ENCODE measurements at regions of chr1 and their contacts with region 1.

Region 1: DNA sequence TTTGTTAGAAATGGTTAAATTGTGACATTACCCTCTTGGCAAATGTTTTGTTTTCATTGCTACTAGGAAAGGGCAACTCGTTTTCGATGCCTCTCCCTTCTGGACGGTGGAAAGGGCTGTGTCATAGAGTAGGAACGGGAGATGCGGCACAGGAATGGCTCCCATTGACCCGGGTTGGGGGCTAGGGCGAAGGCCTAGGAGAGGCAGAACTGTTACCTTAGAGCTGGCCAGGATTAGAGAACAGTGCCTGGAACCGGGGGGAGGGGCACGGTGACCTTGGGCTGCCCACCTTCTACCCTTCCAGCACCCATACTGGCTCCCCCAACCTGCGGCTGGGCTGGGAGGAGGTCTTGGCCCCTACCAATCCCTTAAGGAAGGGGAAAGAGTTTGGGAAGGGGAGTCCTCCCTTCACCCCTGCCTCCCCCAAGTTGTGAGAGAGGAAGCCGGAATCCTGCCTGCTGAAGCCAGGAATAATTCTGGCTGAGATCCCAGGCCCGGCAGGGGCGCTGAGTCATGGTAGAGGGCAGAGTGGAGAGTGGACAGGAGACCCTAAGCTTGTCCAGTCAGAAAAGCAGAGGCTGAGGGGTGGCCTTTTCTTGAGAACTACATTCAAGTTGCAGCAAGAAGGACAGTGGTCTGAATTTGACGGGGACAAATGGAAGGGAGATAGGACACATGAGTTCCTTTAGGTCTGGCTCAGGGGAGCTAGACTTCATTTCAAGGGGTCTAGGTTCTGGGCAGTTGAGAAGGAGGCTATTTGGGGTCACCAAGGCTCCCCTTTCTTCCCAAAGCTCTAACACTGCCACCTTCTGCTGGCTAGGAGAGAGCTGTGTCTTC is 8.2 kb downstream of the LMNA start:
- DNase-seq: no peak
- ATAC-seq: no peak
- H3K4me3 ChIP-seq: no peak overlapping the region
- H3K4me3 Mint-ChIP-seq: peak overlapping the region in 2 of 3 donors; percentile 31 to 45
- H3K27ac ChIP-seq: peak overlapping the region; percentile 52
- H3K27ac Mint-ChIP-seq: peak overlapping the region; percentile 87 to 90
- H3K4me1 ChIP-seq: peaks cover 13 to 71% of the 10 kb centered on the region in 2 experiments
- H3K4me1 Mint-ChIP-seq: peaks cover 53 to 78% (median 70%) of the 10 kb centered on the region in 3 donors
- H3K27me3 ChIP-seq: peaks cover 3 to 6% of the 10 kb centered on the region in 2 experiments
- H3K27me3 Mint-ChIP-seq: peaks cover 0 to 4% of the 10 kb centered on the region in 2 donors

Region 2: GRCh38 chr1:155455588-155456195 is 667.0 kb before region 1 on chr1:
- CTCF ChIA-PET with region 1: no interaction called
- POLR2A ChIA-PET with region 1: no interaction called
- DNase-seq: no peak
- ATAC-seq: no peak
- H3K4me3 ChIP-seq: no peak overlapping the region
- H3K4me3 Mint-ChIP-seq: no peak overlapping the region
- H3K27ac ChIP-seq: no peak overlapping the region
- H3K27ac Mint-ChIP-seq: peak overlapping the region in 1 of 2 donors; percentile 62
- H3K4me1 ChIP-seq: no peaks in the 10 kb centered on the region
- H3K4me1 Mint-ChIP-seq: peaks cover 8 to 13% (median 11%) of the 10 kb centered on the region in 3 donors
- H3K27me3 ChIP-seq: no peaks in the 10 kb centered on the region
- H3K27me3 Mint-ChIP-seq: no peaks in the 10 kb centered on the region

Region 3: DNA sequence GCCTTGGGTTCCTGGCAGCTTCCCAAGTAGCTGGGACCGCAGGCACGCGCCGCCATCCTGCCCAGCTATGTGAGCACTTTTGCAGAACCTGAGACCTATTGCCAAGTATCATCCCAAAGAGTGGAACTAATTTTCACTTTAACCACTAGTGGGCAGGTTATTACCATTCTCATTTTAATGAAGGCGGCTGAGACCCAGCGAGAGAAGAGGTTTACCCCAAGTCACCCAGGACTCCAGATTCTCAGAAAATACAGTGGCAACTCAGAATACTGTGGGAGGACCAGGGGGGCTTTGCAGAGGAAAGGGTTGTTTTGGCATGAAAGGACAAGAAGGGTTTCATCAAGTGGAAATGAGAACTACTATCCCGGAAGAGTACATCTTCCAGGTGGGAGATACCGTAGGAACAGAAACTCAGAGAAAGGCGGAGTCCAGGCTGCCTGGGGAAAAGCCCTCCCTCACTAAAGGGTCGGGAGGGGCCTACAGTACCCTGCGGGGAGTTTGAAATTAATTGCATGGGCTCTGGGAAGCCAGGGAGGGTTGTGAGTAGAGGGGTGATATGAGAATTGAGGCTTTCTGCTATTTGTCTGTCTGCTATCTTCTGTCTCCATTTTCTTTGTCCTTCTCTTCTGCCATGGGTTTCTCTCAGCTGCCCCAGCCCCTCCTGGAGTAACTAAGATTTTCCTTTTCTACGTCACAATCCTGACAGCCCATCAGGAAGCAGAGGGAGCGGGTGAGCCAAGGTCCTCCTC is 23.5 kb after region 1 on chr1:
- CTCF ChIA-PET with region 1: interaction called, 4 to 11 read pairs
- POLR2A ChIA-PET with region 1: no interaction called
- DNase-seq: peak in 16 of 35 experiments; percentile 25 to 79 (median 37)
- ATAC-seq: peak; percentile 60 to 89 (median 88)
- H3K4me3 ChIP-seq: no peak overlapping the region
- H3K4me3 Mint-ChIP-seq: peak overlapping the region; percentile 46 to 58 (median 48)
- H3K27ac ChIP-seq: no peak overlapping the region
- H3K27ac Mint-ChIP-seq: peak overlapping the region; percentile 16 to 43
- H3K4me1 ChIP-seq: peaks cover 2 to 26% of the 10 kb centered on the region in 2 experiments
- H3K4me1 Mint-ChIP-seq: peaks cover 17 to 23% (median 23%) of the 10 kb centered on the region in 3 donors
- H3K27me3 ChIP-seq: peaks cover 0 to 19% of the 10 kb centered on the region in 2 experiments
- H3K27me3 Mint-ChIP-seq: no peaks in the 10 kb centered on the region

Region 4: DNA sequence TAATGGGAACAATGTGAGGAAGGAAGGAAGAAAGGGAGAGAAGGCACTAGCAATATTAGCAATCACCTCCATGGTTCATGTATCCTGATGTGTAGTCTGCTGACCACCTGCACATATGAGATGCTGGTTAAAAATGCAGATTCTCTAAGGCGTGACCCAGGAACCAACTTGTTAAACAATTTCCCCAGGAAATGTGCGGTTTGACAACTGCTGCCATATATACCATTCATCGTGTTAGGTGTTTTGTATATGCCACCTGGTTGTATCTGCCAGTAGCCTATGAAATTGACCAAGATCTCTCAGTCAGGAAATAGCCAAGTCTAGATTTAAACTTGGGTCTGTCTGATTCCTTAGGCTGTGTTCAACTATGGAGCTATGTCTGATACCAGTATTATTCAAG is 34.8 kb after region 1 on chr1:
- CTCF ChIA-PET with region 1: no interaction called
- POLR2A ChIA-PET with region 1: no interaction called
- DNase-seq: no peak
- ATAC-seq: no peak
- H3K4me3 ChIP-seq: no peak overlapping the region
- H3K4me3 Mint-ChIP-seq: peak overlapping the region in 1 of 3 donors; percentile 44
- H3K27ac ChIP-seq: no peak overlapping the region
- H3K27ac Mint-ChIP-seq: peak overlapping the region in 1 of 2 donors; percentile 13
- H3K4me1 ChIP-seq: peaks cover 3 to 58% of the 10 kb centered on the region in 2 experiments
- H3K4me1 Mint-ChIP-seq: peaks cover 15 to 44% (median 24%) of the 10 kb centered on the region in 3 donors
- H3K27me3 ChIP-seq: peaks cover 0 to 14% of the 10 kb centered on the region in 2 experiments
- H3K27me3 Mint-ChIP-seq: no peaks in the 10 kb centered on the region

Measured in T-cell (primary cell).